CD4-positive, alpha-beta memory T cell (primary cell): ENCODE measurements at regions of chr17 and their contacts with region 1.

Region 1: GRCh38 chr17:75131280-75132017 is at the start of gene NT5C:
- DNase-seq: peak in 4 of 5 donors; percentile 38 to 60 (median 49)
- H3K4me3 ChIP-seq: peak within 1 kb of the TSS; percentile 61 to 74
- H3K4me3 Mint-ChIP-seq: peak within 1 kb of the TSS; percentile 87 to 91 (median 90)
- H3K27ac ChIP-seq: peak within 1 kb of the TSS; percentile 80
- H3K27ac Mint-ChIP-seq: peak within 1 kb of the TSS; percentile 81 to 92 (median 88)
- H3K4me1 ChIP-seq: peaks cover 16% of the 10 kb centered on the region
- H3K4me1 Mint-ChIP-seq: peaks cover 8 to 19% (median 11%) of the 10 kb centered on the region in 4 donors
- H3K27me3 ChIP-seq: no peaks in the 10 kb centered on the region
- H3K27me3 Mint-ChIP-seq: no peaks in the 10 kb centered on the region
- total RNA-seq, gene NT5C: 40.1 to 46.6 TPM

Region 2: DNA sequence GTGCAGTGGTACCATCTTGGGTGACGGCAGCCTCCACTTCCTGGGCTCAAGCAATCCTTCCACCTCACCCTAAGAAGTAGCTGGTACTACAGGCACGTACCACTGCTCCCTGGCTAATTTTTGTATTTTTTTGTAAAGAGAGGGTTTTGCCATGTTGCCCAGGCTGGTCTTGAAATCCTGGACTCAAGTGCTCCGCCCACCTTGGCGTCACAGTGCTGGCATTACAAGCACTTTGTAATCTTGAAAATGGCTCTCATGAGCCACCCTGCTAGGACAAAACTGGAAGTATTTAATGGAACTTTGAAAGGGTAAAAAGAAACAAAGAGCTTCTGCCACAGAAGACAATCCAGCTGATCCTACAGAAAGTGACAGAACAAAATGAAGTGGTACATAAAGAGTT is 42.1 kb after region 1 on chr17:
- CTCF ChIA-PET with region 1: interaction called, 12 read pairs
- POLR2A ChIA-PET with region 1: interaction called, 8 read pairs
- intact Hi-C with region 1: loop called (anchors 5 kb)
- DNase-seq: no peak
- H3K4me3 ChIP-seq: no peak overlapping the region
- H3K4me3 Mint-ChIP-seq: no peak overlapping the region
- H3K27ac ChIP-seq: no peak overlapping the region
- H3K27ac Mint-ChIP-seq: peak overlapping the region in 4 of 7 donors; percentile 29 to 75 (median 38)
- H3K4me1 ChIP-seq: peaks cover 9% of the 10 kb centered on the region
- H3K4me1 Mint-ChIP-seq: peaks cover 7 to 26% (median 11%) of the 10 kb centered on the region in 4 donors
- H3K27me3 ChIP-seq: no peaks in the 10 kb centered on the region
- H3K27me3 Mint-ChIP-seq: no peaks in the 10 kb centered on the region

Region 3: DNA sequence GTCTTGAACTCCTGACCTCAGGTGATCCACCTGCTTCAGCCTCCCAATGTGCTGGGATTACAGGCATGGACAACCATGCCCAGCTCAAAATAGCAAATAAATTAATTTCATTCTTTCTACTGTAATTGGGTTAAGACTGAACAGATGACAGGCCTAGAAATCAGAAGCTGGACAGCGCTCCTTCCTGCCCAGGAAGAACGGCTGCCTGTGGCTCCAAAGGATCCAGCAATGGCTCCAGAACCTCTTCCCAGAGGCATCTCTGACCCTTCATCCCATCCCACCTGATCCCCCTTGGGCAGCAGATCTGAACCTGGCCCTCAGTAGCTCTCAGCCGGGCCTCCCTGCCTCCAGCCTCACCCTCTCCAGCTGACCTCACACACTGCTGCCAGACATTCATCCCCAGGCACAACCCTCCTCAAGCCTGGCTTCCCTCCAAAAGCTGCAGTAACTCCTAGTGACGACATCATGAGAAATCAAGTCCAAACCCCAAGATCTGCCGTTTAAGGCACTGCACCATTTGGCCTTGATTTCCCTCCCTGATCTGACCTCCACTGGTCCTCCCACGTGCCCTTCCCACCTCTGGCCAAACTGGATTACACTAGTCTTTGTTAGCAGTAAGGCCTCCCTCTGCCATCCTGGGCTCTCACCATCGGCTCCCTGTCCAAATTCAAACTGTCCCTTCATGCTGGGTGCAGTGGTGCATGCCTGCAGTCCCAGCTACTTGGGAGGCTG is 142.7 kb after region 1 on chr17:
- CTCF ChIA-PET with region 1: no interaction called
- POLR2A ChIA-PET with region 1: no interaction called
- intact Hi-C with region 1: no loop called
- DNase-seq: no peak
- H3K4me3 ChIP-seq: no peak overlapping the region
- H3K4me3 Mint-ChIP-seq: peak overlapping the region in 3 of 8 donors; percentile 25 to 53 (median 25)
- H3K27ac ChIP-seq: no peak overlapping the region
- H3K27ac Mint-ChIP-seq: peak overlapping the region; percentile 3 to 86 (median 68)
- H3K4me1 ChIP-seq: peaks cover 27% of the 10 kb centered on the region
- H3K4me1 Mint-ChIP-seq: peaks cover 8 to 32% (median 19%) of the 10 kb centered on the region in 4 donors
- H3K27me3 ChIP-seq: no peaks in the 10 kb centered on the region
- H3K27me3 Mint-ChIP-seq: no peaks in the 10 kb centered on the region